CD4-positive, alpha-beta T cell (primary cell): ENCODE measurements at regions of chr18 and their contacts with region 1.

Region 1: DNA sequence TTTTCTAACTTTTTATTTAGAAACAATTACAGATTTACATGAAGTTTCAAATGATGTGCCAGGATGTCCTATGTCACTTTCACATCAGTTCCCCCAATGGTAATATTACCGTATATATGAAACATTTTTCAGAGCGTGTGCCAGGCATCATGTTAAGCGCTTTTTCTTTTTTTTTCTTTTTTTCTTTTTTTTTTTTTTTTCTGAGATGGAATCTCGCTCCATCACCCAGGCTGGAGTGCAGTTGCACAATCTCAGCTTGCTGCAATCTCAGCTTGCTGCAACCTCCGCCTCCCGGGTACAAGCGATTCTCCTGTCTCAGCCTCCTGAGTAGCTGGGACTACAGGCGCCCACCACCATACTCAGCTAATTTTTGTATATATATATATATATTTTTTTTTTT is 5.6 kb upstream of the PPP4R1 start:
- DNase-seq: no peak
- ATAC-seq: no peak
- H3K4me3 ChIP-seq: no peak overlapping the region
- H3K4me3 Mint-ChIP-seq: no peak overlapping the region
- H3K27ac ChIP-seq: no peak overlapping the region
- H3K27ac Mint-ChIP-seq: no peak overlapping the region
- H3K4me1 ChIP-seq: peaks cover 6% of the 10 kb centered on the region
- H3K4me1 Mint-ChIP-seq: peaks cover 8% of the 10 kb centered on the region
- H3K27me3 ChIP-seq: no peaks in the 10 kb centered on the region
- H3K27me3 Mint-ChIP-seq: no peaks in the 10 kb centered on the region
- CTCF ChIP-seq: no peak

Region 2: DNA sequence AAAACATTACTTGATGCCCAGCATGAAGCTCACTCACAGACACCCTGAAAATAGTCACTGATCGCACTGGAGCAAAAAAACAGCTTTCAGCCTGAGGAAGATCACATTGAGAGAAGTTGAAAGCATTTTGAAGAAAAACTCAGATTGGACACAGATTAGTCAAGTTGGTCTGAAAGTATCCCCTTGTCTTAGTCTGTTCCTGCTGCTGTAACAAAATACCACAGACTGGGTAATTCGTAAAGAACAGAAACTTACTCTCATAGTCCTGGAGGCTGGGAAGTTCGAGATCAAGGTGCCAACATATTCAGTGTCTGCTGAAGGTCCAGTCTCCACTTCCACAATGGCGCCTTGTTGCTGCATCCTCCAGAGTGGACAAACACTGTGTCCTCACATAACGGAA is 531.7 kb before region 1 on chr18:
- CTCF ChIA-PET with region 1: no interaction called
- POLR2A ChIA-PET with region 1: no interaction called
- intact Hi-C with region 1: loop called in 1 of 2 experiments (anchors 5 kb)
- DNase-seq: no peak
- ATAC-seq: no peak
- H3K4me3 ChIP-seq: no peak overlapping the region
- H3K4me3 Mint-ChIP-seq: no peak overlapping the region
- H3K27ac ChIP-seq: no peak overlapping the region
- H3K27ac Mint-ChIP-seq: peak overlapping the region; percentile 33
- H3K4me1 ChIP-seq: peaks cover 61% of the 10 kb centered on the region
- H3K4me1 Mint-ChIP-seq: peaks cover 50% of the 10 kb centered on the region
- H3K27me3 ChIP-seq: no peaks in the 10 kb centered on the region
- H3K27me3 Mint-ChIP-seq: no peaks in the 10 kb centered on the region
- CTCF ChIP-seq: no peak

Region 3: DNA sequence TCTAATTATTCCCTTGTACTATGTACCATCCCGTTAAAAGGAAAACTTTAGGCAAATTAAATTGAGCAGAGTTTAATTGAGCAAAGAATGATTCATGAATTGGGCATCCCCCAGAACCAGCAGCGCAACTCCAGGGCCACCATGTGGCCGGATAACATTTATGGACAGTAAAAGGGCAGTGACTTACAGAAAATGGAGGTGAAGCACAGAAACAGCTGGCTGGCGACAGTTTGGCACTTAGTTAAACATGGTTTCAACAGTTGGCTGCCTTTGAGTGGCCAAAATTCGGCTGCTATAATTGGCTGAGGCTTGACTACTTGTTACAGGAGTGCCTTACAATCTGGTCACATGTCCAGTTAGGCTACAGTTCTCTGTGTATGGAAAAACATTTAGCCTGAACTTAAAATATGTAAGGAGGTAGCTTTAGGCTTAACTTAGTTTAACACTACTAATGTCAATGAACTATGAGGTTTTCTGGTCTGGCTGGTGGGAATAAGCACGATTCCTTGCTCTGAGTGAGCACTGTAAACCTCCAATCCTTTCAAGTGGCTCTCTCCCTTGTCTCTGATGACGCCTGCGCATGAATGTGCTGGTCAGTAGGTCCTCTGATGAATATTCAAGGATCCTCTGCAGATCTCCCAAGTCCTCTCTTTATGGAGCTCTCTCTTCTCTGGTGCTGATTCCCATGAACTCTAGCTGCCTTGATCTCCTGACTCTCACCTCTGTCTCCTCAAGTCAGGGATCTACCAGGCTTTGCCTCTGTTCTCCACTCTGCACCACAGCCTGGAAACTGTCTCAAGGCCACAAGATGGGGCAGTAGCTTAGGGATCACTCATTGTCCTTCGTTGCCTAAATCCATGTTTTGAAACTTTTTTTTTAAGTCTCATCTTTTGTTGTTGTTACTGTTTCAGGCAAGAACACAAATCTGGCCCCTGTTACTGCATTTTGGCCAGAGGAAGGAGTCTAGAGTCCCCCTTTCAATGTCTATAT is 63.7 kb after region 1 on chr18:
- CTCF ChIA-PET with region 1: no interaction called
- POLR2A ChIA-PET with region 1: no interaction called
- intact Hi-C with region 1: no loop called
- DNase-seq: no peak
- ATAC-seq: no peak
- H3K4me3 ChIP-seq: no peak overlapping the region
- H3K4me3 Mint-ChIP-seq: no peak overlapping the region
- H3K27ac ChIP-seq: no peak overlapping the region
- H3K27ac Mint-ChIP-seq: no peak overlapping the region
- H3K4me1 ChIP-seq: peaks cover 5% of the 10 kb centered on the region
- H3K4me1 Mint-ChIP-seq: peaks cover 5% of the 10 kb centered on the region
- H3K27me3 ChIP-seq: peaks cover 0 to 4% of the 10 kb centered on the region in 2 experiments
- H3K27me3 Mint-ChIP-seq: no peaks in the 10 kb centered on the region
- CTCF ChIP-seq: no peak